Right cardiac atrium (tissue), 5 donors: ENCODE measurements at regions of chr10 and their contacts with region 1.

Region 1: GRCh38 chr10:125144693-125145623 is 15.4 kb downstream of the CTBP2 start:
- DNase-seq: peak; percentile 47 to 72 (median 70)
- ATAC-seq: peak; percentile 43 to 59
- H3K4me3 ChIP-seq: no peak overlapping the region
- H3K27ac ChIP-seq: peak overlapping the region; percentile 28
- H3K4me1 ChIP-seq: peaks cover 39% of the 10 kb centered on the region
- H3K27me3 ChIP-seq: no peaks in the 10 kb centered on the region

Region 2: DNA sequence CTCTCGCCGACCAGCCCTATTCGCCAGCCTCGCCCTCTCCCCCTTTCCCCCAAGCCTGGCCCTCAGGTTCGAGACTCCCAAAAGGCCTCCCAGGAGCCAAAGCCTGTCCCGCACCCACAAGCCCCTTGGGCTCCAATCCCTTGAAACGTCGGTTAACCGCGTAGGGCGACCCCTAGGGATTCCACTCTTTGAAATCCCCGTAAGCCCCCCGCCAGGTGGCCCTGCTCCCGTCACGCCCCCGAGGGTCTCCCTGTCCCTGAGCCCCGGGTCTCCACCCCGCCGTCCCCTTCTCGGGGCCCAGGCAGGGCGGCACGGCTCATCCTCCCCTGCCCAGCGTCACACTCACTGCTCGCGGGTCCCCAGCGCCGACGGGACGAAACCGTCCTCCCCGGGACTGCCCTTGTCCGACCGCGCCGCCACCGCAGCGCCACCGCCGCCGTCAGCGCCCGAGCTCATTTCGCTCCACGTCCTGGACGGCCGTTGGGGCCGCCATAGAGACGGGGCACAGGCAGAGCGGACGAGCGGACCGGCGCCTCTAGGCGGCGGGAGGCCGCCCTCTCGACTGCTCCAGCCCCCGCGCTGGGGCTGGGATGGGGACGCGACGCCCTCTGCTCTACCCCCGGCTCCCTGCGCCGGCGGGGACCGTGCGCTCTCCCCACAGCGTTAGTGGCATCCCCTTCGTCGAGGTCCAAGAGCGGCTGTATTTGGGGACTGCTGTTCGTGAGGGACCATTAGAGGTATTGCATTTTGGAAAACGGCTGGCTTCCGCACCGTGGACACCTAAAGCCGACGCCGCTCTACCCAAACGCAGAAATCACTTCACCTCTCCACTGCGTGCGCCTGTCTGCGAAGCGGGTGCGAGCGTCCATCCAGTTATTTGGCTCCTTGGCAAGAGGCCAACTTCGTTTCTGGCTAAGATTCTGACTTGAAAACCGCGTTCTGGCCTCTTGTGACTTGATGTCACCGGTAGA is 353.3 kb before region 1 on chr10 and contains the start of gene EEF1AKMT2:
- intact Hi-C with region 1: no loop called
- DNase-seq: peak; percentile 88 to 95 (median 95)
- ATAC-seq: peak; percentile 98 to 99
- H3K4me3 ChIP-seq: peak within 1 kb of the TSS; percentile 80
- H3K27ac ChIP-seq: peak within 1 kb of the TSS; percentile 77
- H3K4me1 ChIP-seq: no peaks in the 10 kb centered on the region
- H3K27me3 ChIP-seq: no peaks in the 10 kb centered on the region
- total RNA-seq, gene EEF1AKMT2: 10.6 to 14.5 (median 12.2) TPM

Region 3: GRCh38 chr10:125084191-125084613 is 60.8 kb before region 1 on chr10:
- intact Hi-C with region 1: loop called in 2 of 4 experiments (anchors 10 kb)
- DNase-seq: peak in 2 of 3 donors; percentile 67 to 72
- ATAC-seq: peak; percentile 52 to 86
- H3K4me3 ChIP-seq: no peak overlapping the region
- H3K27ac ChIP-seq: peak overlapping the region; percentile 95
- H3K4me1 ChIP-seq: peaks cover 22% of the 10 kb centered on the region
- H3K27me3 ChIP-seq: no peaks in the 10 kb centered on the region

Region 4: GRCh38 chr10:125102231-125102630 is 42.7 kb before region 1 on chr10:
- intact Hi-C with region 1: no loop called
- DNase-seq: peak in 2 of 3 donors; percentile 2 to 23
- ATAC-seq: no peak
- H3K4me3 ChIP-seq: no peak overlapping the region
- H3K27ac ChIP-seq: no peak overlapping the region
- H3K4me1 ChIP-seq: no peaks in the 10 kb centered on the region
- H3K27me3 ChIP-seq: no peaks in the 10 kb centered on the region

Region 5: GRCh38 chr10:125283191-125283835 is 138.4 kb after region 1 on chr10:
- intact Hi-C with region 1: no loop called
- DNase-seq: no peak
- ATAC-seq: no peak
- H3K4me3 ChIP-seq: no peak overlapping the region
- H3K27ac ChIP-seq: no peak overlapping the region
- H3K4me1 ChIP-seq: no peaks in the 10 kb centered on the region
- H3K27me3 ChIP-seq: no peaks in the 10 kb centered on the region

Region 6: GRCh38 chr10:125363791-125364190 is 218.8 kb after region 1 on chr10:
- intact Hi-C with region 1: no loop called
- DNase-seq: no peak
- ATAC-seq: no peak
- H3K4me3 ChIP-seq: no peak overlapping the region
- H3K27ac ChIP-seq: no peak overlapping the region
- H3K4me1 ChIP-seq: no peaks in the 10 kb centered on the region
- H3K27me3 ChIP-seq: no peaks in the 10 kb centered on the region